Esophagus squamous epithelium (tissue), 5 donors: ENCODE measurements at regions of chr12 and their contacts with region 1.

Region 1: DNA sequence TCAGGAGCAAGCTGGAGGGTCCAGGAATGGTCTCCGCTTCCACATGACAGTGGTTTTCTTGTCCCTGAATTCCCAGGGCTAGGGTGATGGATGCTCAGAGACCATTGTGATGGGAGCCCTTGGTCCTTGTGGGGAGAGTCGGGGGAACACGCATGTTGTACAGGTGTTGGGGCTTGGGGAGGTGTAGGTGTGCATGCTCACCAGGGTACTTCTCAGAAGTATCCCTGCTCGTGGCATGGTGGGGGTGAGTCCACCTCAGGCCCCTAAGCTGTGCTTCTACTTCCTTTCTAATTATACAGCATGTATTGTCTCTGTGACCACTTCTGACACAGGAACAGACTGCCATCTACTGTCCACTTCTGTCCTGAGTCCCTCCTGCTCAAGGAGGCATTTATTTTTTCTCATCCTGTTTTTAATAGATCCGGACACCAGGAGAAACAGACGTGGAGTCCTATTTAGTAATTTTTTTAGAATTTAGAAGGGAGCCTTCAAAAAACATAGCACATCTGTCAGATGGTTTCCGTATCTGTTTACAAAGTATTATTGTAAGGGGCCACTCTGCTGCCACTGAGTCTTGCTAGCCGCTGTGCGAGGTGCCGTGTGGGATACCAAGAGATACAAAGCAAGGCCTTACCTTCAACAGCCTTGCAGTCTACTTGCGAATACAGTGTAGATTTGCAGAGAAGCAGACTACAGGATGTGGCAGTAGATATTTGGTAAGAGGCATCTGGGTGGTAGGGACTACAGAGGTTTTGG is 10.5 kb downstream of the NTF3 start:
- DNase-seq: no peak
- H3K4me3 ChIP-seq: no peak overlapping the region
- H3K27ac ChIP-seq: no peak overlapping the region
- H3K4me1 ChIP-seq: peaks cover 0 to 48% (median 0%) of the 10 kb centered on the region in 3 donors
- H3K27me3 ChIP-seq: peaks cover 0 to 55% (median 0%) of the 10 kb centered on the region in 4 donors
- CTCF ChIP-seq: peak; percentile 20 to 66 (median 46)
- POLR2A ChIP-seq: no peak

Region 2: DNA sequence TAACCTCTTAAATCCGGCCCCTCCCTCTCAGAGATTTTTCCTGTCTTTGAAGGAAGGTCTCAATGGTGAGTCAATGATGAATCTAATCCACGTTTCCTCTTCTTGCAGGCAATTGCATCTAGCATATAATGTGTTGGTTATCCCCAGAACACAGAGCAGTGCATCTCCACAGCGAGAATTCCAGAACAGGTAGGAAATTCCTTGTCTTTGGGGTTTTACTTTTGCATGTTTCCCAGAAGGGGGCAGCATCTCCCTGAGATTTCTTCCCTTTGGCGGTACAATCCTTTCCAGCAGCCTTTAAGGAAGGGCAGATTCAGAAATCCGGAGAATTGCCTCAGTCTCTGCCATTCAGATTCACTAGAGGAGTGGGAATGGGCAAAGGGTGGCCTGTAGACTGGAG is 270.7 kb before region 1 on chr12:
- intact Hi-C with region 1: loop called (anchors 10 kb)
- DNase-seq: no peak
- H3K4me3 ChIP-seq: no peak overlapping the region
- H3K27ac ChIP-seq: no peak overlapping the region
- H3K4me1 ChIP-seq: peaks cover 0 to 12% (median 0%) of the 10 kb centered on the region in 3 donors
- H3K27me3 ChIP-seq: peaks cover 0 to 10% (median 0%) of the 10 kb centered on the region in 4 donors
- CTCF ChIP-seq: peak in 5 of 6 experiments; percentile 52 to 76 (median 62)
- POLR2A ChIP-seq: no peak

Region 3: DNA sequence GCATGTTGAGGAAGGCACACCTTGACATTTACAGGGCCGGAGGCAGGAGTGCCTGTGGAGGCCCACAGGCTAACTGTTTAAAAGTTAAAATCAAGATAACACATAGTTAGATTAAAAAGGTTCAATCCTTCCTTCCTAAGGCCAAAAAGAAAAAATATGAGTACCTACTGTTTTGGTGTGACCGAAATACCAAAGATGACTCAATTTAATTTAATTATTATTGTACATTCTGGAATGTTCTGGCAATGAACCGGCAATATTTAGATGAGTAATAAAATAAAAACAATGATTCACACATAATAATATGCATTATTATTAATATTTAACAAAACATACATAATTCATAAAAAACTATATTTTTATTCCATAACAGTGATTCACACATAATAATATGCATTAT is 147.3 kb before region 1 on chr12:
- intact Hi-C with region 1: no loop called
- DNase-seq: no peak
- H3K4me3 ChIP-seq: no peak overlapping the region
- H3K27ac ChIP-seq: no peak overlapping the region
- H3K4me1 ChIP-seq: peaks cover 0 to 11% (median 0%) of the 10 kb centered on the region in 3 donors
- H3K27me3 ChIP-seq: no peaks in the 10 kb centered on the region
- CTCF ChIP-seq: no peak
- POLR2A ChIP-seq: no peak

Region 4: DNA sequence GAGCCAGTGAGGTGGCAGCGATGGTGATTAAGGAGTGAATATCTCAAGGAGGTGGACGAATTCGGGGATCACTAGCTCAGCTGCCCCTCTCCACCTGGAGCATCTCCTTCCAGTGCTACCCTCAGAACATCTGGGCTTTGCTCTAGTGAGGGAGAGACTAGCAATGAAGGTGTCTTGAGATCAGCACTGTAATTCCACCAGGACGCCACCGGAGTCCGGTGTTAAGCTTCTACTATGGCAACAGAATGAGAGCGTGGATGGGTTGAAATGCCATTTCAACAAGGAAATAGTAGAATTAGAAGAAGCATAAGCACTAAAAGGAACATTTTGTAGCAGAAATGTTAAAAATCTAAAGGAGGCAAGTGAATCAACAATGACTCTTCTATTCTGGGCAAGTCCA is 50.6 kb after region 1 on chr12:
- intact Hi-C with region 1: no loop called
- DNase-seq: no peak
- H3K4me3 ChIP-seq: no peak overlapping the region
- H3K27ac ChIP-seq: no peak overlapping the region
- H3K4me1 ChIP-seq: peaks cover 0 to 28% (median 0%) of the 10 kb centered on the region in 3 donors
- H3K27me3 ChIP-seq: peaks cover 0 to 12% (median 0%) of the 10 kb centered on the region in 4 donors
- CTCF ChIP-seq: no peak
- POLR2A ChIP-seq: no peak

Region 5: DNA sequence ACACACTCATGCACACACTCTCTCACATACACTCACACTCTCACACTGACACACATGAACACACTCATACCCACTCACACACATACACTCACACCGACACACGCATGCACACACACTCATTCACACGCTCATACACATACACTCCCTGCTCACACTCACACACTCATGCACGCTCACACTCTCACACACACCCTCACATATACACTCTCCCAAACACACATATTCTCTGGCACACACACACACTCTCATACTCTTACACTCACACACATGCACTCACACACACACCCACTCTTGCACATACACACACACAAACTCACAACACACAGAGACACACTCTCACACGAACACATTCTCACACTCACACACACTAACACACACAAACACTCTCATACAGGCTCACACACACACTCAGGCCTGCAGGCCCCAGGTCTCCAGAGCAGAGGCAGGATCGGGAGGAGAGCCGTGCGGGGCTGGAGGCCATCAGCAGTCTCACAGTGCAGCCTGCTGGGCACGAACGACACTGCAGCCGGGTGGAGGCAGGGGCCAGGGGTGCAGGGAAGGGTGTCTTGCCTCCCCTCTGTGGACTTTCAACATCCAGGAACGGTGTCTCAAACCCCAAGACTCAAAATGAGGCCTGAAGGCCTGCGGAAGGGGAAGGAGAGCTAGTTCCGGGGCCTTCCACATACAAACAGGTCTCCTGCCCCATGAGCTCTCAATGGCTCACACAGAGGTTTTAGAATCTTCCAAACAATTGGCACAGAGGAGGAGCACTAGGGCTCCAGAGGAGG is 353.9 kb after region 1 on chr12:
- intact Hi-C with region 1: loop called (anchors 10 kb)
- DNase-seq: no peak
- H3K4me3 ChIP-seq: no peak overlapping the region
- H3K27ac ChIP-seq: no peak overlapping the region
- H3K4me1 ChIP-seq: peaks cover 0 to 19% (median 4%) of the 10 kb centered on the region in 3 donors
- H3K27me3 ChIP-seq: peaks cover 0 to 58% (median 0%) of the 10 kb centered on the region in 4 donors
- CTCF ChIP-seq: peak; percentile 36 to 84 (median 76)
- POLR2A ChIP-seq: no peak